ENCODE measurements at regions of chr9 and their contacts with region 1.

Region 1: GRCh38 chr9:130352081-130352480 is 86.5 kb downstream of the HMCN2 start:
- DNase-seq: no peak
- H3K4me3 ChIP-seq: no peak overlapping the region
- H3K27ac ChIP-seq: no peak overlapping the region
- H3K4me1 ChIP-seq: no peaks in the 10 kb centered on the region
- H3K27me3 ChIP-seq: no peaks in the 10 kb centered on the region
- CTCF ChIP-seq: no peak
- EP300 ChIP-seq: no peak
- POLR2A ChIP-seq: no peak

Region 2: DNA sequence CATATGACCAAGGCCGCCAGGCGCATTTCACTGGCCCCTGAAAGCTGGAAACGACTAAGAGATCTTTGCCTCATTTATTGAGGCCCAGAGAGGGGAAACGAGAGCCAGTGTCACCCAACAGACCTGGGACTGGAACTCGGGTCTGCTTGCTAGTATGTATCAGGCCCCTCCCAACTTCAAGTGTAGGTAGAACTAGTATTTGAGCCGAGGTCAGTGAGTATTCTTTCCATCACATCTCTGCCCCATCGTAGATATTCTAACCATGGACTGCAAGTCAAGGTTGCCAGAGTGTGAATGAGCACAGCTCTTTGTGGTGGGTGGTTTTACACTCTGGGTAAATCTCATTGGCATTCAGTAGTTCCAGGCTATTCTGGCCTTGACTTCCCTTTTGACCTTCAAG is 256.2 kb before region 1 on chr9:
- intact Hi-C with region 1: loop called (anchors 5 kb)
- DNase-seq: no peak
- H3K4me3 ChIP-seq: no peak overlapping the region
- H3K27ac ChIP-seq: no peak overlapping the region
- H3K4me1 ChIP-seq: no peaks in the 10 kb centered on the region
- H3K27me3 ChIP-seq: no peaks in the 10 kb centered on the region
- CTCF ChIP-seq: no peak
- EP300 ChIP-seq: no peak
- POLR2A ChIP-seq: no peak

Region 3: DNA sequence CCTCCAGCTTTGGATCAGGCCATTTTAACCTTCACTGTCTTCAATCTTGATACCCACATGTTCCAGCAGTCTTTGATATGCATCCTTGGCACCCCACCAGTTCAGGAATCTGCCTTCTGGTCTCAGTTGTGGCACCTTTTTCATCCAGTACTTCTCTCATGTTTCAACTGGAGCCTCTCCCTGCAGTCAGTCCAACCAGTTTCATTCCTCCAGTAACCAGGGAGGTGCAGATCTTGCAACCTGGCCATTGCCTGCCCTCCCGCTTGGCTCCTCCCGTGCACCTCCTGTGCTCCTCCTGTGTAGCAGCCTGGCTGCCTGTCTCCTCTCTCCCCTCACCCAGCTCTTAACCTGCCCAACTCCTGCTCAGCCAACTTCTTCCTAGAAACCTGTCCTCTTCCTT is 247.5 kb after region 1 on chr9:
- intact Hi-C with region 1: no loop called
- DNase-seq: no peak
- H3K4me3 ChIP-seq: no peak overlapping the region
- H3K27ac ChIP-seq: no peak overlapping the region
- H3K4me1 ChIP-seq: no peaks in the 10 kb centered on the region
- H3K27me3 ChIP-seq: no peaks in the 10 kb centered on the region
- CTCF ChIP-seq: no peak
- EP300 ChIP-seq: no peak
- POLR2A ChIP-seq: no peak